ENCODE measurements at regions of chr10 and their contacts with region 1.

Region 1: DNA sequence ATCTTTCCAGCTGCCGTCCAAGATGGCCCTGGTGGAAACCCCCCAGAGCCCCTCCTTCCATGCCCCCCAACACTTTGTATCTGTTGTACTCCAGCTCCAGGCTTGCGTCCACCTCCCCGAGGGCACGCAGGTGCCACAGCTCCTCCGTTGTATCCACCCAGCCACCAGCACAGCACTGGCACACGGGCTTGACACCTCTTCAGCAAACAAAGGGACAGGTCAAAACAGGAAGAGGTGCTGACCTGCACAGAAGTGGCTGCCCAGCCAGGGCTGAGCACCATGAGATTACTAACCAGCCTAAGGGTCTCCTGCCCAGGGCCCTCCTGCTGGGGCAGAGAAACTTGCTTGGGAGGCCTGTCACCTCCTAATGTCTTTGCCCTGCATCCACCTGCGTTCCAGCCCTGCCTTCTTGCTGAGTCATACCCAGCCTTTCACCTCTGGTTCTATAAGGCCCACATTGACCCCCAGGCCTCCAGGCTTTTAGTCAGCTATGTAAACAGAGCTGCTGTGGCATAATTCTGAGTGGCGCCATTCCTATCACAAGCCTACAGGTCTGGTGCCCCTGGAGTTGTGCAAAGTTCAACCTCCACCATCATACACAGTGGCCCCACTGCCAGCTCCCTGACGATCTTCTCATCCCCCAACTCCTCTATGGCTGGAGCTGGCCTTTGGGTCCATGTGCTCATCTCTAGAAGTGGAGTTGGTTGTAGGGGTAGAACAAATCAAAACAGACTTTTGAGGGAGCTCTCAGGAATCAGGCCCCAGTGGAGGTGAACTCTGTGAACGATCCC is 20.9 kb downstream of the SLC29A3 start:
- DNase-seq: peak; percentile 65
- H3K4me3 Mint-ChIP-seq: peak overlapping the region; percentile 31
- H3K27ac Mint-ChIP-seq: peak overlapping the region; percentile 84
- H3K4me1 Mint-ChIP-seq: peaks cover 36% of the 10 kb centered on the region
- H3K27me3 Mint-ChIP-seq: no peaks in the 10 kb centered on the region
- CTCF ChIP-seq: no peak

Region 2: GRCh38 chr10:70540089-70540788 is 799.8 kb before region 1 on chr10:
- CTCF ChIA-PET with region 1: no interaction called
- POLR2A ChIA-PET with region 1: no interaction called
- intact Hi-C with region 1: no loop called
- DNase-seq: peak; percentile 43
- H3K4me3 Mint-ChIP-seq: no peak overlapping the region
- H3K27ac Mint-ChIP-seq: no peak overlapping the region
- H3K4me1 Mint-ChIP-seq: no peaks in the 10 kb centered on the region
- H3K27me3 Mint-ChIP-seq: peaks cover 26% of the 10 kb centered on the region
- CTCF ChIP-seq: peak; percentile 75

Region 3: DNA sequence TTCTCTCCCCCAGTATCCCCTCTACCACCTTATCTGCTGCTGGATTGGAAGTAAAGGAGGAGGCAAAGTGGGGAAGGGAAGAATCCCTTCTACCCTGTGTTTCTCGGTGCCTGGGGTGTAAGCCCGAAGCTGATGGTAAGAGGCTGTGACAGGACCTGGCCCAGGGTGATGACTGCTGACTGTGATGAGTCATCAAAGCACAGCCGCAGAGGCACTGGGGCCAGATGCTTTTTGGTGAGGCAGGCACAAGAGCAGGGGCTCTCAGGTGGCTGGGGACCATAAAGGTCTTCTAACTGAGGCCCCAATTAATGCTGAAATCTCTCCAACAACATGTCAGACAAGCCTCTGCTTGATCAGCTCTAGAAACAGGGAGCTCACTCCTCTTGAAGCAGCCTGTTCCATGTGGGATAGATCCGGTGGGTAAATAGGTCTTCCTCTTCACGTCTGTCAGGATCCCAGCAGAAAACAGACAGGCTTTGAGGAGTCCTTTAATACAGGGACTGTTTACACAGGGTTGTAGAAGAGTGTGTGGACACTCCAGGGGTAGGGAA is 365.6 kb before region 1 on chr10:
- CTCF ChIA-PET with region 1: no interaction called
- POLR2A ChIA-PET with region 1: no interaction called
- intact Hi-C with region 1: no loop called
- DNase-seq: peak; percentile 36
- H3K4me3 Mint-ChIP-seq: no peak overlapping the region
- H3K27ac Mint-ChIP-seq: no peak overlapping the region
- H3K4me1 Mint-ChIP-seq: no peaks in the 10 kb centered on the region
- H3K27me3 Mint-ChIP-seq: peaks cover 61% of the 10 kb centered on the region
- CTCF ChIP-seq: no peak

Region 4: GRCh38 chr10:71138166-71138830 is 201.7 kb before region 1 on chr10:
- CTCF ChIA-PET with region 1: no interaction called
- POLR2A ChIA-PET with region 1: no interaction called
- intact Hi-C with region 1: no loop called
- DNase-seq: peak; percentile 6
- H3K4me3 Mint-ChIP-seq: no peak overlapping the region
- H3K27ac Mint-ChIP-seq: no peak overlapping the region
- H3K4me1 Mint-ChIP-seq: no peaks in the 10 kb centered on the region
- H3K27me3 Mint-ChIP-seq: peaks cover 73% of the 10 kb centered on the region
- CTCF ChIP-seq: no peak

Region 5: GRCh38 chr10:71366690-71367089 is 26.7 kb after region 1 on chr10:
- CTCF ChIA-PET with region 1: no interaction called
- POLR2A ChIA-PET with region 1: interaction called, 15 read pairs
- intact Hi-C with region 1: no loop called
- DNase-seq: no peak
- H3K4me3 Mint-ChIP-seq: no peak overlapping the region
- H3K27ac Mint-ChIP-seq: no peak overlapping the region
- H3K4me1 Mint-ChIP-seq: peaks cover 21% of the 10 kb centered on the region
- H3K27me3 Mint-ChIP-seq: no peaks in the 10 kb centered on the region
- CTCF ChIP-seq: no peak

Measured in MCF 10A (cell line).